Dorsolateral prefrontal cortex (tissue), 120 donors: ENCODE measurements at regions of chr17 and their contacts with region 1.

Region 1: DNA sequence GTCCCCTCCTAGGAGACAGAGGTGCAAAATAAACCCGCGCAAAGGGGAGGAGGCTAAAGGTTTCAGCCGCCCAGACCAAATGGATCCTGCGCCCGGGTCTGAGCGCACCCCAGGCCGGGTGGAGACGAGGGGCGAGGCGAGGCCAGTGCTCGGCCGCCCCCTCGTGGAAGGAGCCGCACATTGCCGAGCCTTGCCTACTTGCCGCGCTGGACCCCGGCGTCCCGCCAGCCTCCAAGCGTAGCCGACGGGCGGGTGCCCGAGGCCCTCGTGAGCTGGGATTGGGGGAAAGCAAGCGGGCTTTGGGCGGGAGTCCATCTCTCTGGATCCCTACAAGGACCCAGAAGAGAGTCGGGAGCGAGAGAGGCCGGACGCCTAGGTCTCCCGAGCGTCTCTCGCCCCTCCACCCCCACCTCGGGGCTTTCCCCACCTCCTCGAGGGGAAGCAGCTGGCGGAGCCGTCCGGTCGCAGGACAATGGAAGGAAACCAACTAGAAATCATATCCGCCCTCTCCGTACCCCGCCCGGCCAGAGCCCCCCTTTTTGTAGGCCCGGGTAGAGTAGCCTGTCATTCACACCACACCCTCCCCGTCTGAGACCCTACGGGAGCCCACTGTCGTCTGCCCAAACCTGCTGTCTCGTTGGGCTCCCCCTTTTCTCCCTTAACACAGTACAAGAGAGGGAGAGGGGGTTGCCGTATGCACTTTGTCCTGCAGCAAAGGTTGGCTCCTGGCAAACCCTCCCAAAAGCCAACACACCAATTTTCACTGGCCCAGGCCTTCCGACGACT is 664 bp upstream of the BCL6B start:
- DNase-seq: peak in 7 of 10 donors; percentile 41 to 80 (median 63)
- H3K4me3 ChIP-seq: peak overlapping the region in 53 of 59 donors; percentile 0 to 58 (median 39)
- H3K27ac ChIP-seq: peak overlapping the region in 41 of 59 donors; percentile 0 to 81 (median 61)
- H3K27me3 ChIP-seq: peaks cover 0 to 24% (median 12%) of the 10 kb centered on the region in 45 donors
- CTCF ChIP-seq: peak; percentile 59 to 97 (median 94)

Region 2: GRCh38 chr17:6660805-6661463 is 361.3 kb before region 1 on chr17:
- intact Hi-C with region 1: loop called in 1 of 2 experiments (anchors 5 kb)
- DNase-seq: peak in 1 of 10 donors; percentile 55
- H3K4me3 ChIP-seq: no peak overlapping the region
- H3K27ac ChIP-seq: peak overlapping the region in 1 of 59 donors; percentile 17
- H3K27me3 ChIP-seq: peaks cover 0 to 8% (median 0%) of the 10 kb centered on the region in 45 donors
- CTCF ChIP-seq: no peak

Region 3: GRCh38 chr17:6843241-6843880 is 178.8 kb before region 1 on chr17:
- intact Hi-C with region 1: loop called in 1 of 2 experiments (anchors 5 kb)
- DNase-seq: no peak
- H3K4me3 ChIP-seq: peak overlapping the region in 3 of 59 donors; percentile 1 to 37 (median 10)
- H3K27ac ChIP-seq: no peak overlapping the region
- H3K27me3 ChIP-seq: peaks cover 0 to 45% (median 7%) of the 10 kb centered on the region in 45 donors
- CTCF ChIP-seq: peak; percentile 48 to 86 (median 70)

Region 4: DNA sequence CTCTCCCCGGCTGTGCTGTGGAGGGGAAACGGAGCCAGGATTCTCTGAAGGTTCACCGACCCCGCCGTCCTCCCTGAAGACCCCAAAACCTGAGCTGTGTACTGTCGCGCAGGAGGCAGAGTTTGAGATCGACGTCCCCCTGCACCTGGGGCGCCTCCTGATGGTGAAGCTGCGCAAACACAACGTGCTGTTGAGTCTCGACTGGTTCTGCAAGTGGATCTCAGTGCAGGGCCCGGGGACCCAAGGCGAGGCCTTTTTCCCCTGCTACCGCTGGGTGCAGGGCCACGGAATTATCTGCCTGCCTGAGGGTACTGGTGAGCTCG is 128.0 kb before region 1 on chr17:
- intact Hi-C with region 1: no loop called
- DNase-seq: peak in 4 of 10 donors; percentile 25 to 57 (median 40)
- H3K4me3 ChIP-seq: peak overlapping the region in 52 of 59 donors; percentile 20 to 63 (median 44)
- H3K27ac ChIP-seq: no peak overlapping the region
- H3K27me3 ChIP-seq: peaks cover 0 to 10% (median 0%) of the 10 kb centered on the region in 45 donors
- CTCF ChIP-seq: peak in 47 of 56 donors; percentile 12 to 60 (median 40)

Region 5: GRCh38 chr17:6913608-6914443 is 108.4 kb before region 1 on chr17:
- intact Hi-C with region 1: loop called in 1 of 2 experiments (anchors 5 kb)
- DNase-seq: peak; percentile 60 to 80 (median 68)
- H3K4me3 ChIP-seq: peak overlapping the region in 54 of 59 donors; percentile 9 to 64 (median 38)
- H3K27ac ChIP-seq: no peak overlapping the region
- H3K27me3 ChIP-seq: no peaks in the 10 kb centered on the region
- CTCF ChIP-seq: peak; percentile 43 to 92 (median 81)